Esophagus muscularis mucosa (tissue), 4 donors: ENCODE measurements at regions of chr2 and their contacts with region 1.

Region 1: DNA sequence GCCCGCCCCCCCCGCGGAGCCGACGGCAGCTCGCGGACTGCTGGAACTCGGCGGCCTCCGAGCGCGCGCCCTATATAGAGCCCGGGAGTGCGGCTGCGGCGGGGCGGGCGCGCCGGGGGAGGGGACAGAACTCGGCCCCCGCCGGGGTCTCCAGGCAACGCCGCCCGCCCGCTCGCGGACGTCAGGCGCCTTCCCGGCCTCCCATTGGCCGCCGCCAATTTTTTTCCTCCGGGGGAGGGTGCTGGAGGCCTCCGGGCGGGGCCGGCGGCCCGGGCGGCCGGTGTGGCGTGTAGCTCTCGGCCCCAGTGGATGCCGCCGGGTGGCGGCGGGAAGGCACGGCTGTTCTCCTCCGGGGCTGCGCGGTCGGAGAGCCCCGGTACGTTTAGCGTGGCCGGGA is at the start of gene ZFP36L2:
- DNase-seq: peak; percentile 98
- H3K4me3 ChIP-seq: peak within 1 kb of the TSS; percentile 80 to 93 (median 90)
- H3K27ac ChIP-seq: peak within 1 kb of the TSS; percentile 97 to 100 (median 98)
- H3K4me1 ChIP-seq: peaks cover 43 to 64% (median 48%) of the 10 kb centered on the region in 4 donors
- H3K27me3 ChIP-seq: no peaks in the 10 kb centered on the region
- CTCF ChIP-seq: peak in 1 of 3 experiments; percentile 22
- EP300 ChIP-seq: no peak
- POLR2A ChIP-seq: peak; percentile 35
- total RNA-seq, gene ZFP36L2: 81.7 to 117 (median 85.7) TPM

Region 2: DNA sequence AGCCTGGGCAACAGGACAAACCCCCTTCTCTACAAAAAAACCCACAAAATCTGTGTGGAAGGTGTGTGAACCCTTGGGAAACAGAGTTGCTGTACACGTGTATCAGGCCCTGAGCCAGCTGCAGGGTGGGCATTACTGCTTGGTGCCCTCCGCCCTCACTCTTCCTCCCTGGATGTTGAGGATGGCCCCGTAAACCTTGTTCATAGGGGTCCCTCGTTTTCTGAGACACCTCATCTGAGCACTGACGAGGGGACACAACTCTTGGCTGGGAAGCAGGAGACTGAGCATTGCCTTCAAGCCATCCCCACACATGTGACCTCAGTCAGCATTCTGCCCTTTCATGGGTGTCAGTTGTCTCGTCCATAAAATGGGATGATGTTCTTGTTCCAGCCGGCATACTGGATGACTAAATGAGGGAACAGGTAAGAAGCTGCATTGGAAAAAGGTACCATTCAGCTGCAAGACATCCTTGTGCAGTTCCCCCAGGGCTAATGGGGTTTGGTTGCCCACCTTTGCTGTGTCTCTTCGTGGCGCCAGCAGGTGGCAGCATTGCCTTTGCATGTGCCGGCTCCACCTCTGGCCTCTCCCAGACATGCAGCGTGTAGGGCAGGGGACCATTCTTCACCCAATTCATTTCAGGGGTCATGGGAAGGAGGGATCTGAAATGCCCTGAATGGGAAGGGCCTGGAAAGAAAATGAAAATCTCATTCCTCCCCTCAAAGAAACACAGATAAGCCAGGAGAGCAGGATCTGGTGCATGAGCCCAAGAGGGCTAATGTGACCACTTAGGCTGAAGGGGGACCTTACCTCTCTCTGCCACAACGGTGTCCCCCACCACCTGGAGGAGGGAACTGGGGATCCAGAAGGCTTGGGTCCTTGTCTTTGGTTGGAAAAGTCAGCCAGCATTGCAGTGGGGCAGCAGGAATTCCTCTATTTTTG is 397.8 kb before region 1 on chr2:
- intact Hi-C with region 1: loop called (anchors 2 kb)
- DNase-seq: no peak
- H3K4me3 ChIP-seq: no peak overlapping the region
- H3K27ac ChIP-seq: peak overlapping the region; percentile 19 to 65 (median 44)
- H3K4me1 ChIP-seq: peaks cover 24 to 40% (median 38%) of the 10 kb centered on the region in 4 donors
- H3K27me3 ChIP-seq: no peaks in the 10 kb centered on the region
- CTCF ChIP-seq: peak; percentile 93 to 94 (median 93)
- EP300 ChIP-seq: no peak
- POLR2A ChIP-seq: no peak

Region 3: DNA sequence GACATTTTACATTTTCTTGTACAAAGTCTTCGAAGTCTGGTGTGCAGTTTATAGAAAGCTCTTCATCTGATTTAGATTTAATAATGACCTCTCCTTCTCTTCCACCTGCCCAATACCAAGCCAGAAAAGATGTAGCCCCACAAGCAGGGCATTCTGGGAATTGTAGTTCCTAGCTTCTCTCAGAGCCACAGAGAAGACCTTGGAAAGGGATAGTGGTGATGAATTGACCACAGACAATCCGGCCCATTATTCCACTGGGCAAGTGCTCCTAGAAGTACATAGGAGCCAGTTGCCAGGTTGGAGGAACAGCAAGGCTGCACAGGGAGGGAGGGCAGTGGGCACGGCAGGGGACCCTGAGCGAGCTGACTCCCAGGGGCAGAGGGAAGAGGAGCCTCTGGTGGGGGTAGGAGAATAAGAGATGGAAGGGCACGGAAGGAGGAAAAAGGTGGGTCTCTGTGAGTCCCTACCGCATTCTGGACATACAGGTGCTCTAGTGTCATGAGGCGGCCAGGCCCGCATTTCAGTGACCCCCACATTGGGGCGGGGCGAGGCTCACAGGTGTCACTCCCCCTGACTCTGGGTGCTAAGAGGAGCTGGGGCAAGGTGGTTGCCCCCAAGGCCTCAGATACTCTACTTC is 281.7 kb before region 1 on chr2:
- intact Hi-C with region 1: loop called (anchors 5 kb)
- DNase-seq: no peak
- H3K4me3 ChIP-seq: no peak overlapping the region
- H3K27ac ChIP-seq: no peak overlapping the region
- H3K4me1 ChIP-seq: peaks cover 9 to 18% (median 16%) of the 10 kb centered on the region in 4 donors
- H3K27me3 ChIP-seq: no peaks in the 10 kb centered on the region
- CTCF ChIP-seq: no peak
- EP300 ChIP-seq: no peak
- POLR2A ChIP-seq: no peak

Region 4: DNA sequence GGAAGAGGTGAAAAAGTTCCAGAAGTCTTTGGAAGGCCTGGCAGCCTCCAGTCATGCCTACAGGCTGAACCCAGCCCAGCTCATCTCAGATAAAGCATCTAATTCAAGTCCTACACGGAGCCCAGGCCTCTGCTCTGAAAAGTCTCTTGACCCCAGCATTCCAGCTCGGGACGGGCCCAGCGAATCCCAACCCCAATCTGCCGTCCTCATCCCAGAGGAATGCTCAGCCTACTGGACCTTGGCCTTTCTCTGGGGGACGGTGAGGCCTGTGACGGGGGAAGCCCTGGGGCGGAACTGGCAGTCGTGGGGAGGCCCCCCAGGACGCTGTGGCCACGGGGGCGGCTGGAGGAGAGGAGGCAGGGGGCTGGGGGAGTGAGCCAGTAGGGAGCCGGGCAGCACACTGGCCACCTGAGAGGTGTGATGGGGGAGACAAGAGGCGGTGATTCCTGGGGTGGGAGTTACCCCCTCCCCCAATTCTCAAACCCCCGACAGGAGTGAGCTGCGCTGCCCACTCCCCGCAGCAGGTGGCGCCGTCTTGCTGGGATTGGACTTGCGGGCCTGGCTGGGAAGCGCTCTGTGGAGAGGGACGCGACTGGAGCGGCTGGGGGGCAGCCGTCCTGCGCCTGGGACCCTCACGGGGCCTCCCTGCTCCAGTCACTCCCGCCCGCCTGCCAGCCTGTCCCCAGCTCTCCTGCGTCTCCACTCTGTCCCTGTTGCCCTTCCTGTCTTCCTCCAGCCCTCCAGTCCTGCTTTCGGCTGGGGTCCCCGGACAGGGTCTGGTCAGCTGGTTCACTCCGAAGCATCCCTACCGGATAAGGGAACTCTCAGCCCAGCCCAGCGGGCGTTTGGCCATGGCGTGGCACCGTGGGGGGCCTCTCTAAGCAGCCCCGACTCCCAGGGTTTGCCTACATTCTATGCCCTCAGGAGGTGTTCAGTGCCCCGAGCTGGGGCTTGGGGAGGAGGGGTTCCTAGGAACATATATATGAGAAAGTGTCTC is 251.5 kb before region 1 on chr2:
- intact Hi-C with region 1: loop called (anchors 2 kb)
- DNase-seq: no peak
- H3K4me3 ChIP-seq: peak overlapping the region; percentile 50 to 58 (median 52)
- H3K27ac ChIP-seq: peak overlapping the region; percentile 53 to 60 (median 56)
- H3K4me1 ChIP-seq: peaks cover 12 to 25% (median 20%) of the 10 kb centered on the region in 4 donors
- H3K27me3 ChIP-seq: no peaks in the 10 kb centered on the region
- CTCF ChIP-seq: peak; percentile 90 to 96 (median 90)
- EP300 ChIP-seq: no peak
- POLR2A ChIP-seq: no peak

Region 5: GRCh38 chr2:43024515-43025011 is 202.0 kb before region 1 on chr2:
- intact Hi-C with region 1: loop called (anchors 5 kb)
- DNase-seq: no peak
- H3K4me3 ChIP-seq: no peak overlapping the region
- H3K27ac ChIP-seq: peak overlapping the region in 1 of 4 donors; percentile 55
- H3K4me1 ChIP-seq: peaks cover 19 to 36% (median 28%) of the 10 kb centered on the region in 4 donors
- H3K27me3 ChIP-seq: no peaks in the 10 kb centered on the region
- CTCF ChIP-seq: peak; percentile 91 to 93 (median 93)
- EP300 ChIP-seq: no peak
- POLR2A ChIP-seq: no peak

Region 6: GRCh38 chr2:43086451-43087221 is 139.9 kb before region 1 on chr2:
- intact Hi-C with region 1: loop called (anchors 5 kb)
- DNase-seq: no peak
- H3K4me3 ChIP-seq: peak overlapping the region in 1 of 4 donors; percentile 10
- H3K27ac ChIP-seq: peak overlapping the region; percentile 88 to 95 (median 91)
- H3K4me1 ChIP-seq: peaks cover 59 to 69% (median 65%) of the 10 kb centered on the region in 4 donors
- H3K27me3 ChIP-seq: no peaks in the 10 kb centered on the region
- CTCF ChIP-seq: peak in 1 of 3 experiments; percentile 5
- EP300 ChIP-seq: peak; percentile 86
- POLR2A ChIP-seq: no peak

Region 7: GRCh38 chr2:43484323-43484930 is 257.9 kb after region 1 on chr2:
- intact Hi-C with region 1: loop called (anchors 5 kb)
- DNase-seq: no peak
- H3K4me3 ChIP-seq: no peak overlapping the region
- H3K27ac ChIP-seq: peak overlapping the region; percentile 62 to 77 (median 71)
- H3K4me1 ChIP-seq: peaks cover 22 to 40% (median 33%) of the 10 kb centered on the region in 4 donors
- H3K27me3 ChIP-seq: no peaks in the 10 kb centered on the region
- CTCF ChIP-seq: peak; percentile 66 to 81 (median 71)
- EP300 ChIP-seq: no peak
- POLR2A ChIP-seq: no peak

Region 8: DNA sequence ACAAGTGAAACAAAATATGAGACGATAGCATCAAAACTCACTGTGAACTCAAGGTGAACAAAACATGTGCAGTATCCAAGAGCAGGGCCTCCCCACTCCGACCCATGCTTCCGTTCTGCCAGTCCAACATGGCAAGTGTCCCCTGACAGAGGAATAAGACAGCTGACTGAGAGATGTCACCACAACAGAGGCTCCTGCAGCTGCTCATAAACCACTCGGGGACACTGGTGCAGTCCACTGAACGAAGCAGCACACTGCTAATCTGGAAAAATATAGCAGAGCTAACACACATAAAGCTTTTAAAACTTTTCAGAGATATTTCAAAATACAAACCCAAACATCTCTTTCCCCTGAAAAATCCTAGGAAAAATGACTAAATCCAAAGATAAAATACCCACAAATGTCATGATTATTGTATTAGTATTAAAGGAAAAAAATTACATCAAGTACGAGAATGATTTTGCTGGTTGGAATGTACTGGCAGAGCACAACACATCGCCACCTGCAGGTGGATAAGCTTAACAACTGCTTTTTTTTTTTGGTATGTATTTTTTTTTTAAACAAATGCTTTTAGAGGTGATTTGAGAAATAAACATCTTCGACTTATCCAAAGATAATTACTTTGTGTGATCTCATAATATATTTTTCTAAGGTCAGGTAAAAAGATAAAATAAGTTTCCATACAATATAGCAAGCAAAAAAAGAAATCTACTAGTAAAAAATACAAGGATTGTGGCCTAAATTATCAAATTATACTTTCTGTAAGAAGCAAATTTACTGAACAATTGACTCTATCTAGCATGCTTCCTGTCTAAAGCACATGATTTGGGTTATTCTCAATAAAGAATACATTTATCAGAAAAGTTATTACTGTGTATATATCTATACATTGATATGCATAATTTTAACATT is 350.7 kb after region 1 on chr2:
- intact Hi-C with region 1: no loop called
- DNase-seq: no peak
- H3K4me3 ChIP-seq: no peak overlapping the region
- H3K27ac ChIP-seq: peak overlapping the region; percentile 26 to 46 (median 37)
- H3K4me1 ChIP-seq: peaks cover 4 to 14% (median 12%) of the 10 kb centered on the region in 4 donors
- H3K27me3 ChIP-seq: no peaks in the 10 kb centered on the region
- CTCF ChIP-seq: peak; percentile 70 to 80 (median 74)
- EP300 ChIP-seq: no peak
- POLR2A ChIP-seq: no peak